MCF 10A (cell line): ENCODE measurements at regions of chr11 and their contacts with region 1.

Region 1: DNA sequence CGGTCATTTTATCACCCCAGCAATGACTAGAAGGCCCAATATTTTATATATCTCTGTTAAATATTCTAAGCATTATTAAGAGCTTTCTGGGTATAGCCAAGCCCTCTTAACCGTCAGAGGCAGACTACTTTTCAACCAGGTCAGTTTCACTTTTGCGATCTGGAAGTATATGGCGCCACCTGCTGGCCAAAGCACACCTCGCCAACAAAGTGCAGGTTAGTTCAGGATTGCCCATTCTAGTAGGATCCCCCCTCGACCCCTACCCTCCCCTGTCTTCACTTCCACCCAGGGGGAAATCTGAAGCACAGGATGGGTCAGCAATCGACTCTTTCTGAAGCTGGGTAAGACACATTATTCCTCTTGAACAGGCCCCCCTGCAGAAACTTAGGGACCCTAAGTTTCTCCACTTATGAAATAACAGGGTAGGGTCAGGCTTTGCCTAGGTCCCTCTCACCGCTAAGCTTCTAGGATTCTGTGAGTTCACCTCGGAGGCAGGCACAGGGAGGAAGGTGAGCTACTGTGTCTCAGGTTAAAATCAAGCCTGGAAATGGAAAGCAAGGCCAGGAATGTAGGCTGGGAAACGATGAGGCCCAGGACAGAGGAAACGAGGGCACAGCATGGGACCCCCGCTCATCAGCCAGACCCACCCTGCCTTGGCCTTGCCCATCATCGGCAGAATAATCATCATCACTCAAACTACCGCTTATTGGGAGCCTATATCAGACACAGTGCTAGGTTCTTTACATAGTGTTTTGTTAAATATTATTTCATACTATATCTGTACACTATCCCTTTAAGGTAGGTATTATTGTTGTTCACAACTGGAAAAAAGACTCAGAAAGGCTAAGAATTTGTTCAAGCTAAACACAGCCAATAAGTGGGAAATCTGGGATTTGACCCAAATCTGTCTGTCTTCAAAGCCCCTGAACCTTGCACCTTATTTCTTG is 35.6 kb downstream of the KCNJ1 start:
- DNase-seq: peak; percentile 86
- H3K4me3 Mint-ChIP-seq: no peak overlapping the region
- H3K27ac Mint-ChIP-seq: no peak overlapping the region
- H3K4me1 Mint-ChIP-seq: peaks cover 10% of the 10 kb centered on the region
- H3K27me3 Mint-ChIP-seq: no peaks in the 10 kb centered on the region
- CTCF ChIP-seq: peak; percentile 79

Region 2: GRCh38 chr11:127843483-127844396 is 987.7 kb before region 1 on chr11:
- CTCF ChIA-PET with region 1: no interaction called
- POLR2A ChIA-PET with region 1: no interaction called
- intact Hi-C with region 1: loop called (anchors 10 kb)
- DNase-seq: peak; percentile 80
- H3K4me3 Mint-ChIP-seq: no peak overlapping the region
- H3K27ac Mint-ChIP-seq: no peak overlapping the region
- H3K4me1 Mint-ChIP-seq: no peaks in the 10 kb centered on the region
- H3K27me3 Mint-ChIP-seq: no peaks in the 10 kb centered on the region
- CTCF ChIP-seq: peak; percentile 70

Region 3: GRCh38 chr11:128146926-128147605 is 684.4 kb before region 1 on chr11:
- CTCF ChIA-PET with region 1: interaction called, 19 read pairs
- POLR2A ChIA-PET with region 1: no interaction called
- intact Hi-C with region 1: no loop called
- DNase-seq: peak; percentile 73
- H3K4me3 Mint-ChIP-seq: peak overlapping the region; percentile 48
- H3K27ac Mint-ChIP-seq: peak overlapping the region; percentile 92
- H3K4me1 Mint-ChIP-seq: peaks cover 22% of the 10 kb centered on the region
- H3K27me3 Mint-ChIP-seq: no peaks in the 10 kb centered on the region
- CTCF ChIP-seq: no peak

Region 4: DNA sequence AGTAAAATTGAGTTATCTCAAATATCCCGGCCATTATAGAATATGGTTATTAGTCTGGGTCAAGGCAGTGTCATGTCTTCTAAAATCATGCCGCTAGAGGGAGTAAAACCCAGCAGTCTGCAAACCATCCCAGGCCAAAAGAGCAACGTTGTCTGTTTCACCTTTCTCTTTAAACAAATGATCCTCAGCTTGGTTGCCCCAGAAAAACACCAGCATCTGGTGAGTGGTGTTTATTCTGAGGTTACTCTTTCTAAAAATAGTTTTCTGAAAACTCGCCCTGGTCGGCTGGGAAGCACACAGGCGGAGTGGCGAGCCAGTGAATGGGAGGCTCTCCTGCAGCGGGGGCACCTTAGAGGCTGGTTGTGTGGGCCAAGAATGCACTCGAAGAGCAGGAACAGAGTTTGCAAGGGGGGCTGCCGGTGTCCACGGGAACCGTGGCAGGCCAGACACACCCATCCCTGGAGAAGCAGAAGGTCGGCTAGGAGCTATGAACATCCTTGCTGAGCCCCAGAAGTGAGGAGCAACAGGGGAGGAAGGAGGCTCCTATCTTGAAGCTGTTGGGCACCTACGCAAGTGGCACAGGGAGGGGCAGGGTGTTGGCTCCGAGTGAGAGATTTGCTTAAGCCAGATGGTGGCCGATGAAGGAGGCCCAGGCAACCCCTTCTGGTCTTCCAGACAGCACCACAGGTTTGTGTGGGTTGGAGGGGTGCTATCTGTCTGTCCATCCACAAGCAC is 541.2 kb before region 1 on chr11:
- CTCF ChIA-PET with region 1: interaction called, 12 read pairs
- POLR2A ChIA-PET with region 1: interaction called, 3 read pairs
- intact Hi-C with region 1: loop called (anchors 1 kb)
- DNase-seq: peak; percentile 72
- H3K4me3 Mint-ChIP-seq: no peak overlapping the region
- H3K27ac Mint-ChIP-seq: no peak overlapping the region
- H3K4me1 Mint-ChIP-seq: peaks cover 15% of the 10 kb centered on the region
- H3K27me3 Mint-ChIP-seq: no peaks in the 10 kb centered on the region
- CTCF ChIP-seq: peak; percentile 76

Region 5: GRCh38 chr11:128776424-128777284 is 54.8 kb before region 1 on chr11:
- CTCF ChIA-PET with region 1: no interaction called
- POLR2A ChIA-PET with region 1: no interaction called
- intact Hi-C with region 1: no loop called
- DNase-seq: peak; percentile 32
- H3K4me3 Mint-ChIP-seq: no peak overlapping the region
- H3K27ac Mint-ChIP-seq: no peak overlapping the region
- H3K4me1 Mint-ChIP-seq: no peaks in the 10 kb centered on the region
- H3K27me3 Mint-ChIP-seq: no peaks in the 10 kb centered on the region
- CTCF ChIP-seq: peak; percentile 22

Region 6: DNA sequence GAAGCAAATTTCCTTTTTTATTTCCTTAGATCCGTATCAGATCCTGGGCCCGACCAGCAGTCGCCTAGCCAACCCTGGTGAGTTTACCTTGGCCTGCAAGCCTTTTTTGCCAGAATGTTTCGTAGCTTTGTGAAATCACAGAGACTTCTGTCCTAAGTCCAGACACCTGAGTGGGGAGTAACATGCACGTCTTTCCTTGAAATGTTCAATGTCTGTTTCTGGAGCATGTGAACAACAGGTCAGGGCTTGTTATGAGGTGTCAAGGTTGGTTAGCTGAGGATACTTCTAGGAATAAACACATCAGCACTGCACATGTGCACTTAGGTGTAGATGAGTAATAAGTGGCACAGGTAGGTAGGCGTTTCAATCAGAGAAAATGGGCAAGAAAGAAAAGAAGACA is 22.3 kb before region 1 on chr11:
- CTCF ChIA-PET with region 1: interaction called, 22 read pairs
- POLR2A ChIA-PET with region 1: interaction called, 7 read pairs
- intact Hi-C with region 1: no loop called
- DNase-seq: peak; percentile 81
- H3K4me3 Mint-ChIP-seq: no peak overlapping the region
- H3K27ac Mint-ChIP-seq: peak overlapping the region; percentile 39
- H3K4me1 Mint-ChIP-seq: peaks cover 7% of the 10 kb centered on the region
- H3K27me3 Mint-ChIP-seq: no peaks in the 10 kb centered on the region
- CTCF ChIP-seq: no peak

Region 7: GRCh38 chr11:128848815-128849455 is 17.5 kb after region 1 on chr11:
- CTCF ChIA-PET with region 1: interaction called, 13 read pairs
- POLR2A ChIA-PET with region 1: interaction called, 3 read pairs
- intact Hi-C with region 1: no loop called
- DNase-seq: peak; percentile 41
- H3K4me3 Mint-ChIP-seq: no peak overlapping the region
- H3K27ac Mint-ChIP-seq: no peak overlapping the region
- H3K4me1 Mint-ChIP-seq: no peaks in the 10 kb centered on the region
- H3K27me3 Mint-ChIP-seq: peaks cover 11% of the 10 kb centered on the region
- CTCF ChIP-seq: peak; percentile 51